Motor neuron (in vitro differentiated cells): ENCODE measurements at regions of chr3 and their contacts with region 1.

Region 1: DNA sequence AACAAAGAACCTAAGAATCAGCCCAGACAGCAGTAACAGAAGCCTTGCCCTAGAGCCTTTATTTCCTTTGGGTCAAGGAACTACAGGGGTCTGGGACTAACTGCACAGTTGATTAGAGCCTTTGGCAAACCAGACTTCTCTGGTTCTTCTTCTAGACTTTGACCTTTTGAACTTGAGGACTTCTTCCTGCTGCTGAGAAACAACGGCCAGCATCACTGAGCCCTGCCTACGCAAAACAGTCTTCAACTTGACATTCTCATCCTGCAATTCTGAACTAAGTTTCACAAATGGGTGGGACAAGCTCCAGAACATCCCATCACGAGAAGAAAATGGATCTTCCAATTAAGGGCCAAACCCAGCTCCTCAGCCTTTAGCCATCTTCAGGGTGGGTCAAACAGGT is 31.4 kb downstream of the CMTM6 start:
- ATAC-seq: no peak
- H3K4me3 ChIP-seq: no peak overlapping the region
- H3K27ac ChIP-seq: no peak overlapping the region
- H3K4me1 ChIP-seq: peaks cover 0 to 2% of the 10 kb centered on the region in 2 donors

Region 2: GRCh38 chr3:32120471-32120870 is 350.8 kb before region 1 on chr3:
- in situ Hi-C with region 1: no loop called
- ATAC-seq: no peak
- H3K4me3 ChIP-seq: no peak overlapping the region
- H3K27ac ChIP-seq: no peak overlapping the region
- H3K4me1 ChIP-seq: no peaks in the 10 kb centered on the region

Region 3: DNA sequence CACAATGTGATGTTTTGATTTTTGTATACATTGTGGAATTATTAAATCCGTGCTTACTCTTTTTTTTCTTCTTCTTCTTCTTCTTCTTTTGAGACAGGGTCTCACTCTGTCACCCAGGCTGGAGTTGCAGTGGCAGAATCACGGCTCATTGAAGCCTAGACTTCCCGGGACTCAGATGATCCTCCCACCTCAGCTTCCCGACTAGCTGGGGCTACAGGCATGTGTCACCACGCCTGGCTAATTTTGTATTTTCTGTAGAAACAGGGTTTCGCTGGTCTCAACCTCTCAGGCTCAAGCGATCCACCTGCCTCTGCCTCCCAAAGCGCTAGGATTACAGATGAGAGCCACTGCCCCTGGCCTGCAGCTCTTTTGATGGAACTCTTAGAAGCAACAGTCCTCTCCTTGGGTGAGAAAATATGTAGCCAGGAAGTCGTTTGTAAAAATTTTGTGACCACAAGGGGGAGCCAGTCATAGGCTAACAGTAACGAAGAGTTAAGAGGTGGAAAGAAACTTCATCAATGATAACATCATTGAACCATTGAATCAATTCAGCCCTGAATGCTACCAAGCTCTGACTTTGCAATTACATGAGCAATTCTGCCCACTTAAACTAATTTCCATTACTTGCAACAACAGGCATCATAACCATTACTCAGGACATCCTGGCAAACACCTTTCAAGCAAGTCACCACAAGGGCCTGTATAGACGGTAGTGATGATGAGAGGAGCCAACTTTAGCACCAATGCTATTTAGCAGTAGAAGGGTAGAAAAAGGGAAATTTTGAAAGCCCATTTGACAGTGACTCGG is 96.3 kb before region 1 on chr3:
- in situ Hi-C with region 1: loop called in 1 of 9 experiments (anchors 10 kb)
- ATAC-seq: peak in 4 of 8 experiments; percentile 52 to 90 (median 82)
- H3K4me3 ChIP-seq: no peak overlapping the region
- H3K27ac ChIP-seq: no peak overlapping the region
- H3K4me1 ChIP-seq: peaks cover 4% of the 10 kb centered on the region in 2 donors